CD8-positive, alpha-beta T cell (primary cell): ENCODE measurements at regions of chr22 and their contacts with region 1.

Region 1: DNA sequence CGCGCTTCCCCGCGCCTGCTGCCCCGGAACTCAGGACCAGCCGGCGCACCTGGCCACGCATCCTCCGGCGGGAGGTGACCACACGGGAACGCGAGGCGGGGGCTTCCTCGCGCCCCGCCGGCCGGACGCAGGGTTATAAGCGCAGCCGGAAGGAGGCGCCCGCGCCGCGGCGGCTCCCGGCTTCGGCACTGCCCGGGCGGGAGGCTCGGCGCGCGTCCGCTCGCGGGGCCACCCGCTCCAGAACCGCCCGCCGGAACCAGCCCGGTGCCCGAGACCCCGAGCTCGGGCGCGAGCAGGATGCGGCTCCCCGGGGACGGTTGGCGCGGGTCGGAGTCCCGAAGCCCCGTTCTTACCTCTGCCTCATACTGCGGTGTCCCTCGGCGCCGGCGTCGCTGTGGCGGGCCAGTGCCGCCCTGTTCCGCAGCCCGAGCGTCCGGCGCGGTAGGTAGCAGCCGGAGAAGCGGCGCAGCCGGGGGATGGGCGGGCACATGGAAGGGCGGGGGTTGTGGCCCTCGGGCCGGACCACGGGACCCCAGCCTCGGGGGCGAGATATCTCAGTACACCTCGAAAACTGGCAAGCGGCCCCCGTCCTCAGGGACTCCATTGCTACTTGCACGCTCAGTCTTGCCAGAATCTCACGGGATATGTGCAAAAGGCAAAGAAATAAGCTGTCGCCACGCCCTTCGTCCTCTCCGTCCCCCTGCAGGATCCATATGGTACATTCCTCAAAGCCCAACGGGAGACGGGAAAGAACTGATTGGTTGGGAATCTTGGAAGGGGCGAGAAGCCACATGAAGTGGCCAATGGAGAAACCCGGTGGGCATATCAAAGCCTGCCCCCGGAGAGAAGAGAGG is 23.1 kb downstream of the MICAL3 start:
- DNase-seq: peak in 8 of 9 experiments; percentile 34 to 88 (median 54)
- ATAC-seq: peak; percentile 40
- H3K4me3 ChIP-seq: peak overlapping the region; percentile 87 to 92
- H3K4me3 Mint-ChIP-seq: peak overlapping the region; percentile 86
- H3K27ac ChIP-seq: peak overlapping the region; percentile 53 to 79
- H3K27ac Mint-ChIP-seq: peak overlapping the region; percentile 85
- H3K4me1 ChIP-seq: peaks cover 29% of the 10 kb centered on the region
- H3K4me1 Mint-ChIP-seq: peaks cover 41% of the 10 kb centered on the region
- H3K27me3 ChIP-seq: no peaks in the 10 kb centered on the region
- H3K27me3 Mint-ChIP-seq: peaks cover 12% of the 10 kb centered on the region
- CTCF ChIP-seq: peak; percentile 31

Region 2: DNA sequence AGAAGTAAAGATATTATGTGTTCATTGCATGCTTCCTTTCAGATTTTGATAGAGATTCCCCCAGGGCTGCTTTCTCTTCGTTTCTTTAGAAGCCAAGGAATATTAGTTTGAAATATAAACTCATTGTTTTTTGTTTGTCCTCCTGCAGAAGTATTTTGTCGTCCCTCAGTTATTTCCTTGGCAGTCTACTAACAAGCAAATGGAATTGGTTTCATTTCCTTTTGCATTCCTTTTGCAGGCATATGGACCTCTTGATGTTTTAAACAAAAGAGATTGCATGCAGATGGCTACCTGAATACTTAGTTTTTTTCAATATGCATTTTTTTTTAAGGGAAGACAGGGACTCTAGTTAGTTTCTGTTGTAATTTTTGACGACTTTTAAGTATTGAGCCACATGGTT is 300.5 kb before region 1 on chr22:
- CTCF ChIA-PET with region 1: no interaction called
- POLR2A ChIA-PET with region 1: no interaction called
- intact Hi-C with region 1: no loop called
- DNase-seq: no peak
- ATAC-seq: no peak
- H3K4me3 ChIP-seq: no peak overlapping the region
- H3K4me3 Mint-ChIP-seq: no peak overlapping the region
- H3K27ac ChIP-seq: no peak overlapping the region
- H3K27ac Mint-ChIP-seq: no peak overlapping the region
- H3K4me1 ChIP-seq: peaks cover 2% of the 10 kb centered on the region
- H3K4me1 Mint-ChIP-seq: peaks cover 6% of the 10 kb centered on the region
- H3K27me3 ChIP-seq: no peaks in the 10 kb centered on the region
- H3K27me3 Mint-ChIP-seq: no peaks in the 10 kb centered on the region
- CTCF ChIP-seq: no peak

Region 3: DNA sequence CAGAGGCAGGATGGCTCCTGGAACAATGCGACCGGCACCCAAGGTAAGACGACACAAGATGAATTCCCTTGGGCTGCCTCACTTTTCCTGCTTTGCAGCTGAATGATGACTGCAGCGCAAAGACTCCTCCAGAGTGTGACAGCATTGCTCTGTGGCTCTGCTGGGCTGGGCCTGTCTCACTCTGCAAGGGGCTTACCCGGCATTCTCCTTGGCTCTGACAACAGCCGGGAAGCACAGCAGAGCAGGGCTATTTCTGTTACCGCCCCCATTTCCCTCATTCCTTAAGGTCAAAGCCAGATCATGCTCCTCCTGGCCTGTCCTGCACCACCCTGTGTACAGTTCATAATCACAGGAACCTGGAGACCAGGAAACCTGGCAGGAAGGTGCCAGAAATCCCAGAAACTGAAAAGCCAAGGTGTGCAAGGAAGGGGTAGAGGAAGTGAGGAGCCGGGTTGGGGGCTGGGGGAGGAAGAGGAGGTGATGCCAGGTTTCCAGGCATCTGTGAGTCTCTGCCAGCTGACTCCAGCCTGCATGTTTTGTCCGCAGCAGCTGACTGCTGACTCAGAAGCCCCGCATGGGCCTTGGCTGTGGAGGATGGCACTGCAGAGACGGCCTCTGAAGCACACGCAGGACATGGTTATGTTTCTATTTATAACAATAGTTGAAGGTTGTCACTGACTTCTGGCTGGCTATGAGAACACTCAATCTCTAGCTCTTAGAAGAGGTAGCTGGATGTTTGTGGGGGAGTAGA is 90.5 kb before region 1 on chr22:
- CTCF ChIA-PET with region 1: no interaction called
- POLR2A ChIA-PET with region 1: no interaction called
- intact Hi-C with region 1: no loop called
- DNase-seq: no peak
- ATAC-seq: no peak
- H3K4me3 ChIP-seq: no peak overlapping the region
- H3K4me3 Mint-ChIP-seq: no peak overlapping the region
- H3K27ac ChIP-seq: no peak overlapping the region
- H3K27ac Mint-ChIP-seq: no peak overlapping the region
- H3K4me1 ChIP-seq: no peaks in the 10 kb centered on the region
- H3K4me1 Mint-ChIP-seq: no peaks in the 10 kb centered on the region
- H3K27me3 ChIP-seq: no peaks in the 10 kb centered on the region
- H3K27me3 Mint-ChIP-seq: no peaks in the 10 kb centered on the region
- CTCF ChIP-seq: no peak

Region 4: DNA sequence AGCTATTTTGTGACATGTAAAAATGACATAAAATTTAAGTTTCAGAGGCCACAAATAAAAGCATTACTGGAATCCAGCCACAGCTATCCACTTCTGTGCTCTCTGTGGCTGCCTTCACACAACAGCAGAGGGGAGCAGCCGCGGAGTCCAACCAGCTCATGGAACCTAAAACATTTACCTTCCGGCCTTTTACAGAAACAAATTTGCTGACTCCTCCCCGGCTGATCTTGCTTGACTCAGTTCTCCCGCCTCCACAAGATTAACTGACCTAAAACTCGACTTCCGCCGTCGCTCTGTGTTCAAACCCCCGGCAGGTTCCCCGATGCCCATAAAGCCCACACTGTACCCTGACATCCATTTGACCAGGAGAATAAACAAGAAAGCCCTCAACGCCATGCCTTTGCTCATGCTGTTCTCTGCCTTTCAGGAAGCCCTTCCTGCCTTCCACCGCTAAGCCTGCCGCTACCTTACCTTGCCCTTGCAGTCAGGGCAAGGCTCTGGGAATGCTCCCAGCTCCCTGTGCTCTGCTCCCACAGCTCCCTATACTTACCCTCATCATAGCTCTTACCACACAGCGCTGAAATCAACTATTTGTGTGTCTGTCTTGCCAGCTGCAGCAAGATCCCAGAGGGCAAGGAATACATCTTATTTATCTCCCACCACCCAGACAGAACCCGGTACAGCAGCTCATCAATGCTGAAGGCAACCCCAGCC is 12.3 kb before region 1 on chr22:
- CTCF ChIA-PET with region 1: no interaction called
- POLR2A ChIA-PET with region 1: no interaction called
- intact Hi-C with region 1: no loop called
- DNase-seq: no peak
- ATAC-seq: no peak
- H3K4me3 ChIP-seq: no peak overlapping the region
- H3K4me3 Mint-ChIP-seq: no peak overlapping the region
- H3K27ac ChIP-seq: no peak overlapping the region
- H3K27ac Mint-ChIP-seq: no peak overlapping the region
- H3K4me1 ChIP-seq: no peaks in the 10 kb centered on the region
- H3K4me1 Mint-ChIP-seq: peaks cover 5% of the 10 kb centered on the region
- H3K27me3 ChIP-seq: no peaks in the 10 kb centered on the region
- H3K27me3 Mint-ChIP-seq: no peaks in the 10 kb centered on the region
- CTCF ChIP-seq: no peak

Region 5: DNA sequence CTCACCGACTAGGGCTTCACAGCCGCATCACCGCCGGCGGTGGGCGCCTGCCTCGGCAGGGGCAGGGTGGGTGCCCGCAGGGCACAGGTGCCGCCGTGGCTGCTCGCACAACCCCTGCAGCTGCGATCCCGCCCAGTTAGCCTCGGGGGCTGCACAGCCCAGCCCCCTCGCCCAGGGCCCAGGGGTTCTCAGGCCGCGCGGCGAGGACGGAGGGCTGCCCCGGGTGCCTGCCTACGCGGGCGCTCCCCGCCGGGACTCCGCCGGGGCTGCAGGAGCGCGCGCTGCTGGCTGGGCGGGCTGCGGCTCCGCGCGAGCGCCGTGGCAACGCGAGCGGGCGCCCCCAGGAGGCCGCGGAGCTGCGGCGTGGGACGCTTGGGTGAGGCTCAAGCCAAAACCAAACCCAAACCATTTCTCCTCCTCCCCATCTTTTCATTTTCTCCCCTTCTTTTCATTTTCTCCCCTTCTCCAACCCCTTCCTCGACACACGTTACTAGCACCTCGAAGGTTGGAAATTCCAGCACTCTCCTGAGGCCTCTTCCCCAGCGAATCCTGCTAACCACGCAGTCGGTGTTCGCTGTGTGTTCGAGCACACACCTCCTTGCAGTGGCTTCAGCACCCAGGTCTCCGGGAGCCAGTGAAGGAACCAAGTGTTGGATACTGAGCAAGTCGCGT is 23.1 kb after region 1 on chr22 and contains the start of gene MICAL3:
- CTCF ChIA-PET with region 1: interaction called, 3 read pairs
- POLR2A ChIA-PET with region 1: no interaction called
- intact Hi-C with region 1: loop called in 1 of 2 experiments (anchors 1 kb)
- DNase-seq: peak; percentile 41 to 82 (median 56)
- ATAC-seq: peak; percentile 93
- H3K4me3 ChIP-seq: peak within 1 kb of the TSS; percentile 27 to 60
- H3K4me3 Mint-ChIP-seq: peak within 1 kb of the TSS; percentile 90
- H3K27ac ChIP-seq: no peak within 1 kb of the TSS
- H3K27ac Mint-ChIP-seq: no peak within 1 kb of the TSS
- H3K4me1 ChIP-seq: peaks cover 5% of the 10 kb centered on the region
- H3K4me1 Mint-ChIP-seq: peaks cover 14% of the 10 kb centered on the region
- H3K27me3 ChIP-seq: peaks cover 10 to 12% of the 10 kb centered on the region in 2 experiments
- H3K27me3 Mint-ChIP-seq: peaks cover 43% of the 10 kb centered on the region
- CTCF ChIP-seq: peak; percentile 47
- total RNA-seq, gene MICAL3: 7.0 to 11.7 TPM

Region 6: GRCh38 chr22:18068381-18068988 is 67.2 kb after region 1 on chr22:
- CTCF ChIA-PET with region 1: no interaction called
- POLR2A ChIA-PET with region 1: no interaction called
- intact Hi-C with region 1: no loop called
- DNase-seq: no peak
- ATAC-seq: no peak
- H3K4me3 ChIP-seq: no peak overlapping the region
- H3K4me3 Mint-ChIP-seq: no peak overlapping the region
- H3K27ac ChIP-seq: no peak overlapping the region
- H3K27ac Mint-ChIP-seq: no peak overlapping the region
- H3K4me1 ChIP-seq: no peaks in the 10 kb centered on the region
- H3K4me1 Mint-ChIP-seq: no peaks in the 10 kb centered on the region
- H3K27me3 ChIP-seq: peaks cover 0 to 6% of the 10 kb centered on the region in 2 experiments
- H3K27me3 Mint-ChIP-seq: peaks cover 37% of the 10 kb centered on the region
- CTCF ChIP-seq: no peak